WTC11 (cell line): ENCODE measurements at regions of chr4 and their contacts with region 1.

Region 1: GRCh38 chr4:153127760-153128494 is 76.3 kb upstream of the TRIM2 start:
- DNase-seq: peak; percentile 91
- ATAC-seq: peak; percentile 78
- H3K4me3 Mint-ChIP-seq: peak overlapping the region; percentile 47
- H3K27ac Mint-ChIP-seq: peak overlapping the region; percentile 84
- H3K4me1 Mint-ChIP-seq: peaks cover 18% of the 10 kb centered on the region
- H3K27me3 Mint-ChIP-seq: peaks cover 2% of the 10 kb centered on the region; the same call in 1 of the 2 replicates
- CTCF ChIP-seq: peak; percentile 71

Region 2: GRCh38 chr4:152289941-152290340 is 838.0 kb before region 1 on chr4:
- CTCF ChIA-PET with region 1: no interaction called
- POLR2A ChIA-PET with region 1: no interaction called
- DNase-seq: no peak
- ATAC-seq: no peak
- H3K4me3 Mint-ChIP-seq: no peak overlapping the region
- H3K27ac Mint-ChIP-seq: no peak overlapping the region
- H3K4me1 Mint-ChIP-seq: peaks cover 18% of the 10 kb centered on the region
- H3K27me3 Mint-ChIP-seq: no peaks in the 10 kb centered on the region
- CTCF ChIP-seq: no peak

Region 3: GRCh38 chr4:152850377-152850776 is 277.6 kb before region 1 on chr4:
- CTCF ChIA-PET with region 1: interaction called, 21 read pairs
- POLR2A ChIA-PET with region 1: no interaction called
- DNase-seq: peak; percentile 25
- ATAC-seq: peak; percentile 89
- H3K4me3 Mint-ChIP-seq: peak overlapping the region; percentile 48
- H3K27ac Mint-ChIP-seq: peak overlapping the region; percentile 99
- H3K4me1 Mint-ChIP-seq: peaks cover 56% of the 10 kb centered on the region
- H3K27me3 Mint-ChIP-seq: peaks cover 4% of the 10 kb centered on the region; the same call in 1 of the 2 replicates
- CTCF ChIP-seq: no peak

Region 4: DNA sequence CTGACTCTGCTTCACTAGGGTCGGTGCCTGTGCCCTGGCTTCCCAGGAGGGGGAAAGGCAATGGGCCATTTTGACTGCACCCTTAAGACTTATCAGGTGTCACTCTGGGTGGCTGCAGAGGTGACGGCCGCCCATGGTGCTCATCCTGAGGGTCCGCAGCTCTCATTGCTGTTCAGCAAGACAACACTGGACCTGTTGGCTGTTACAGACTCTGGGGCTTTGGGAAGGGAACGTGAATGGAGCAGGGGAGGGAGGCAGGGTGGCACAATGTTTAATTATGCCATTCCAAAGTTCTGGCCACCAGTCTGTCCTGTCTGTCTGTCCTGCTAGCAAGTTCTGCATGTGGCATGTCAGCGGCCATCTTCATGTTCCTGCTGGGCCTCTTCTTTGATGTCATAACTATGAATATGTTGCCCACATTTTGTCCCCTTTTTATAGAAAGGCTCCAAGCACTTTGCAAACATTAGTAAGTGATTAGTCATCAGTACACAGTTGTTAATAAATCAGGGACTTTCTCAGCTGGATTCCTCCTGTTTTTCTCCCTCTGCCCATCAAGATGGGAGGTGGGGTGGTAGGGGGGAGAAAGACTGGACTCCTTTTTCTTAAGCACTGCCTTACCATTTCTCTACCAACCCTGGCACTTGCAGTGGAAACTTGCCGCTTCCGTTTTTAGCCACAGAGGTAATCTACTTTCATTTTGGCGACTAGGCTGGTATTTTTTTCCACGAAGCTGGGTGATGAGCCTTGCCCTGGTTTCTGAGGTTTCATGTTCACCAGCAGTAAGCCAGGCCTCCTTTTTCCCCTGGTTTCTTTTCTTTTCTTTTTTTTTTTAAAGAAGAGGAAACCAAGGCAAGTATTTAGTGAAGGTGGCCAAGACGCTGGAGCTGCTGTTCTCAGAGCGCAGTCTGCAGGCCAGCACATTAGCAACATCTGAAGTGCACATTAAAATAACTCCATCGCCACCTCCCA is 12.3 kb before region 1 on chr4:
- CTCF ChIA-PET with region 1: interaction called, 22 read pairs
- POLR2A ChIA-PET with region 1: no interaction called
- DNase-seq: no peak
- ATAC-seq: no peak
- H3K4me3 Mint-ChIP-seq: no peak overlapping the region
- H3K27ac Mint-ChIP-seq: no peak overlapping the region
- H3K4me1 Mint-ChIP-seq: no peaks in the 10 kb centered on the region
- H3K27me3 Mint-ChIP-seq: no peaks in the 10 kb centered on the region
- CTCF ChIP-seq: no peak

Region 5: GRCh38 chr4:153451911-153452657 is 324.2 kb after region 1 on chr4:
- CTCF ChIA-PET with region 1: no interaction called
- POLR2A ChIA-PET with region 1: no interaction called
- DNase-seq: peak; percentile 64
- ATAC-seq: peak; percentile 95
- H3K4me3 Mint-ChIP-seq: no peak overlapping the region
- H3K27ac Mint-ChIP-seq: 0 out of 2 replicates have a peak overlapping the region, but pooled peaks have one; percentile 61
- H3K4me1 Mint-ChIP-seq: peaks cover 23% of the 10 kb centered on the region
- H3K27me3 Mint-ChIP-seq: peaks cover 3% of the 10 kb centered on the region; the same call in 1 of the 2 replicates
- CTCF ChIP-seq: no peak